HEK293 (cell line): ENCODE measurements at regions of chr2 and their contacts with region 1.

Region 1: DNA sequence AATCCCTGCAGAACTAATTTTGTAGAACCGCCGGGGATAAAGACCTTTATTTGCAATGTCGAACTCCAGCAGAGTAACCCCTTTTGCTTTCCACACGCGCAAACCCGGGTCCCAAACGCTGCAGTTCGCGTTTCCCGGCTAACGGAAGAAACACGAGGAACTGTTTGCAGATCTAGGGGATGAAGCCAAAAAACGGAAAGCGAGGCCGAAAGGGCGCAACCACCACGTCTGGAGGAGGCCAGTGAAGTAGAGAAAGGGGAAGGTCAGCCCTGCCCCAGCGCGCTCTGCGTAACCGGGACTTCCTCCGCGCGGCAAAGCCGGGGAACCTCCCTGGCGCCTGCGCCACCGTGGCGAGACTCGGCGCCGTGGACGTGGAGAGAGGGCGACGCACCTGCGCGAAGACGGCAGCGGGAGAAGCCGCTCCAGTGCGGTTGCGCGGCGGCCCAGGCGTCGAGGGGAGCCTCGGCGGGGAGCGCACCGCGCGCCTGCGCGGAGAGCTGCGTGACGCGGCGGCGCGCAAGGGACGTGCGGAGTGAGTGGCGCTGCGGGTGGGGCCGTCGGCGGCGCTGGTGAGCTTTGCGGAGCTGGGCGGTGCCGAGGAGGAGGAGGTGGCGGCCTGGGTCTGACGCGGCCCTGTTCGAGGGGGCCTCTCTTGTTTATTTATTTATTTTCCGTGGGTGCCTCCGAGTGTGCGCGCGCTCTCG is at the start of gene PPP1CB:
- H3K4me3 ChIP-seq: peak within 1 kb of the TSS; percentile 97
- H3K27ac ChIP-seq: peak within 1 kb of the TSS; percentile 98
- H3K4me1 ChIP-seq: peaks cover 15% of the 10 kb centered on the region
- CTCF ChIP-seq: no peak; the same call in 1 of the 2 replicates

Region 2: DNA sequence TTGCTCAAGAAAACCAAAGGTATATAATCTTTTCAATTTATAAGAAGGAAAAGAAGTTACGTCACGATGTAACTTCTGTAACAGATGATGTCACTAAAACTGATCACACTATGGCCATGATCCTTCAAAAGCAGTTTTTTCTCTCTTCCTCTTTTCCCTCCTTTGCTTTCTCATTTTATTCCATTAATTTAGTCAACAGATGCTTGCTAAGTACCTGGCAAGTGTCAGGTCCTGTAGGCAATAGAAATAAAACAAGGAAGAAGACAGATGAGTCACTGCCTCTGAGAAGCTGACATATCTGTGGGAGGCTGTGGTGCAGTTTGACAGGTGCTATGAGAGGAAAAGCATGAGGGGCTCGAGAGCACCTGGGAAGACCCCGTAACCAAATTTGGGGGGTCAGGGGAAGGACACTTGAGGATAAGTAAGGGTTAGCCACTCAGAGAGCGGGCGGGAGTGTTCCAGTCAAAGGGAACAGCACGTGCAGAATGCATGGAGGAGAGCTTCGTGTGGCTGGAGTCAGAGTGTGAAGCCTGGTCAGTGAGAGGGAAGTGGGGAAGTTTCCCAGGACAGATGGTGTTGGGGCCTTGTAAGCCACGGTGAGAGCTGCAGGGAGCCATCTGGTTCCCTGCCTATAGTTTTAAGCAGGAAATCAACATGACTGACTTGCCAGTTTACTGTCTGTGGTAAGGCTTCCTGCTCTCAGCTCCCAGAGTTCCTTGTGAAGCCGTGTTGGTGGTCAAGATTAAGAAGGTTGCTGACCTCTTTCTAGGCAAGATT is 557.6 kb before region 1 on chr2:
- CTCF ChIA-PET with region 1: no interaction called
- POLR2A ChIA-PET with region 1: no interaction called
- H3K4me3 ChIP-seq: no peak overlapping the region
- H3K27ac ChIP-seq: no peak overlapping the region
- H3K4me1 ChIP-seq: no peaks in the 10 kb centered on the region
- CTCF ChIP-seq: no peak

Region 3: GRCh38 chr2:28639836-28640235 is 111.6 kb before region 1 on chr2:
- CTCF ChIA-PET with region 1: no interaction called
- POLR2A ChIA-PET with region 1: no interaction called
- H3K4me3 ChIP-seq: no peak overlapping the region
- H3K27ac ChIP-seq: no peak overlapping the region
- H3K4me1 ChIP-seq: no peaks in the 10 kb centered on the region
- CTCF ChIP-seq: no peak

Region 4: DNA sequence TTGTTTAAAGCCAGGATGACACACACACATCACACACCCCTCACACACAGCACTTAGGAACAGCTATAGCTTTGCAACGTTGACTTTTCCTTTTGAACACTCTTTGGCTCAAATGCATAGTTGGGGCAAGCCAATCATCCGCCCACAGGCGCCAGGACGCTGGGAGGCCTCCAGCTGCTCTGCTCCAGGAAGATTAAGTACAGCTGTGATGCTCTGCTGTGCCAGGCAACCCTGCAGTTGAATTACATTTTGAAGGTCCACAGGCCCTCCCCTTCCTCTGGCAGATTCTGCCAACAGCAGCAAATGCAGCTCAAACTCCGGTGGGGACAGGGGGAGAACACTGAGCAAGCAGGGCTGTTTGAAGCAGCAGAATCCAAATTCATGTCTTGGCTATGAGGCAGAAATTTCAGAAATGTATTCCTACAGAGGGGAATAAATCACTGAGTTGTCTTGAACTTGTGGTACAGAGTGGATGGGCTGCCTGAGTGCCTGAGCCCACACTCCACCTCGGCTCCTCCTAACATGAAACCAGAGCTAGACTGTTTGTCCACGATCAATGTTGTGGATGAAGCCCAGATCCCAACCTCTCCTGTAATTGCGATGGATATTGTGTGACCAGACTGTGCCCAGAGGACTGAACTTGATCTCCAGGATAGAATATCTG is 86.2 kb before region 1 on chr2:
- CTCF ChIA-PET with region 1: interaction called, 3 read pairs
- POLR2A ChIA-PET with region 1: interaction called, 11 read pairs
- H3K4me3 ChIP-seq: no peak overlapping the region
- H3K27ac ChIP-seq: no peak overlapping the region
- H3K4me1 ChIP-seq: 0 out of 2 replicates have a peak, but pooled peaks cover 6% of the 10 kb centered on the region
- CTCF ChIP-seq: no peak